ENCODE measurements at regions of chr16 and their contacts with region 1.

Region 1: DNA sequence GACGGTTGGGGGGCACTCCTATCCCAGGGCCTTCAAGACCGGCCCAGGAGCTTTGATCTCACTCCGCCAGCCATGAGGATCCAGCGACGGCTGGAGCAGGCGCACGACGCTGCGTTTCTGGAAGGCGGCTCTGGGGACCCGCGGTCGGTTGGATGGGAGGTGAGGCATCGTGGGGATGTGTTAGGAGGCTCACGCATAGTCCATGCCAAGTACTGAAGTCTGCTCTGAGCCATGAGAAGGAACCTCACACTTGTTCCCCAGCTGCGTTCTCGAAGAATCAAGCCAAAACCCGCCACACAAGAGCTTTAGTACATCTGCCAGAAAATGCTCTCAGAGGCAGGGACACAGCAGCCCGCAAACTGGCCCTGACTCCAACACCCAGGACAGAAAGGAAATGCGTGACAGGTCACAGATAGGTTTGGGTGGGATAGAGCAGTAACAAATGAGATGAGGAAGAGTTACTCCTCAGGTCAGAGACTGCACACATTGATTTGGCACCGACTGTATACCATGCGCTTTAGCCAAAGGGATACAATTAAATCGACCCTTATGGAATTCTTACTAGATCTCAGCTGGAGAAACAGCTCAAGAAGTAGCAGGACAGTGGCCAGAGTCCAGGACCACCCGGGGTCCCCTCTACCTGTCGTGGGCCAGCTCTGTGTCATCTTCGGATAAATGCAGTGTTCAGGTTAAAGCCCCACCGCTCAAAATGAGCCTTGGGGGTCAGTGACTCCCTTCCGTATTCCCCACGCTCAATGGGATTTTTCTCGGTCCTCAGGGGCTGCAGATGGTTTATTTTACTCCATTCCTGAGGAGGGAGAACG is 6.7 kb upstream of the GSG1L start:
- DNase-seq: no peak
- H3K4me3 ChIP-seq: no peak overlapping the region
- H3K27ac ChIP-seq: no peak overlapping the region
- H3K4me1 ChIP-seq: no peaks in the 10 kb centered on the region
- H3K27me3 ChIP-seq: peaks cover 2% of the 10 kb centered on the region
- CTCF ChIP-seq: no peak

Region 2: DNA sequence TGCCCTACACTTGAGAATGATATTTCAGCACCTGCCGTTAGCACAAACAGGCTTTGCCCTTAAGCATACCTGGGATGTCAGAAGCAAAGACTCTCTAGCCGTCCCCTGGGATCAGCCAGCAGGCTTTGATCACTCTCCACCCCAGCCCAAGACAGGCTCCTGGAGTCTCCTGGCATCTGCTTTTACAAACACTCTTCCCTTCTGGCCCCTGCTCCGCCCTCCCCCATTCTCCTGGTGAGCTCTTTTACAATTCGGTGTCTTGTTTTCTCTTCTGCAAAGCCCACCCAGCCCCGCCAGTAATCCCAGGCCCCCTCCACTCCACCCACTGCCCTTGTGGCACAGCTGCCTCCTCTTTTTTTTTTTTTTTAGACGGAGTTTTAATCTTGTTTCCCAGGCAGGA is 469.8 kb before region 1 on chr16:
- CTCF ChIA-PET with region 1: no interaction called
- dilution Hi-C with region 1: no loop called
- in situ Hi-C with region 1: no loop called
- intact Hi-C with region 1: loop called (anchors 1 kb)
- DNase-seq: no peak
- H3K4me3 ChIP-seq: no peak overlapping the region
- H3K27ac ChIP-seq: no peak overlapping the region
- H3K4me1 ChIP-seq: no peaks in the 10 kb centered on the region
- H3K27me3 ChIP-seq: no peaks in the 10 kb centered on the region
- CTCF ChIP-seq: no peak

Region 3: GRCh38 chr16:27690608-27691007 is 379.6 kb before region 1 on chr16:
- CTCF ChIA-PET with region 1: no interaction called
- dilution Hi-C with region 1: no loop called
- in situ Hi-C with region 1: no loop called
- intact Hi-C with region 1: loop called (anchors 1 kb)
- DNase-seq: no peak
- H3K4me3 ChIP-seq: no peak overlapping the region
- H3K27ac ChIP-seq: no peak overlapping the region
- H3K4me1 ChIP-seq: no peaks in the 10 kb centered on the region
- H3K27me3 ChIP-seq: no peaks in the 10 kb centered on the region
- CTCF ChIP-seq: peak; percentile 30 to 45

Region 4: GRCh38 chr16:27892881-27893280 is 177.3 kb before region 1 on chr16:
- CTCF ChIA-PET with region 1: no interaction called
- dilution Hi-C with region 1: no loop called
- in situ Hi-C with region 1: no loop called
- intact Hi-C with region 1: loop called (anchors 5 kb)
- DNase-seq: no peak
- H3K4me3 ChIP-seq: no peak overlapping the region
- H3K27ac ChIP-seq: no peak overlapping the region
- H3K4me1 ChIP-seq: no peaks in the 10 kb centered on the region
- H3K27me3 ChIP-seq: peaks cover under 1% of the 10 kb centered on the region
- CTCF ChIP-seq: no peak

Region 5: GRCh38 chr16:27999687-28000086 is 70.5 kb before region 1 on chr16:
- CTCF ChIA-PET with region 1: no interaction called
- dilution Hi-C with region 1: no loop called
- in situ Hi-C with region 1: no loop called
- intact Hi-C with region 1: no loop called
- DNase-seq: peak; percentile 43
- H3K4me3 ChIP-seq: no peak overlapping the region
- H3K27ac ChIP-seq: no peak overlapping the region
- H3K4me1 ChIP-seq: no peaks in the 10 kb centered on the region
- H3K27me3 ChIP-seq: no peaks in the 10 kb centered on the region
- CTCF ChIP-seq: no peak